Activated CD8-positive, alpha-beta T cell treated with anti-CD3 and anti-CD28 coated beads, Interleukin-2, amount 10 ng/mL, durations not matched to agents 7 days and 5 days (primary cell): ENCODE measurements at regions of chr6 and their contacts with region 1.

Region 1: GRCh38 chr6:29752451-29753308 is 29.4 kb downstream of the HLA-F start:
- DNase-seq: peak; percentile 89
- ATAC-seq: peak; percentile 71
- H3K4me3 Mint-ChIP-seq: peak overlapping the region; percentile 95
- H3K27ac Mint-ChIP-seq: peak overlapping the region; percentile 96
- H3K4me1 Mint-ChIP-seq: peaks cover 53% of the 10 kb centered on the region
- H3K27me3 Mint-ChIP-seq: no peaks in the 10 kb centered on the region

Region 2: DNA sequence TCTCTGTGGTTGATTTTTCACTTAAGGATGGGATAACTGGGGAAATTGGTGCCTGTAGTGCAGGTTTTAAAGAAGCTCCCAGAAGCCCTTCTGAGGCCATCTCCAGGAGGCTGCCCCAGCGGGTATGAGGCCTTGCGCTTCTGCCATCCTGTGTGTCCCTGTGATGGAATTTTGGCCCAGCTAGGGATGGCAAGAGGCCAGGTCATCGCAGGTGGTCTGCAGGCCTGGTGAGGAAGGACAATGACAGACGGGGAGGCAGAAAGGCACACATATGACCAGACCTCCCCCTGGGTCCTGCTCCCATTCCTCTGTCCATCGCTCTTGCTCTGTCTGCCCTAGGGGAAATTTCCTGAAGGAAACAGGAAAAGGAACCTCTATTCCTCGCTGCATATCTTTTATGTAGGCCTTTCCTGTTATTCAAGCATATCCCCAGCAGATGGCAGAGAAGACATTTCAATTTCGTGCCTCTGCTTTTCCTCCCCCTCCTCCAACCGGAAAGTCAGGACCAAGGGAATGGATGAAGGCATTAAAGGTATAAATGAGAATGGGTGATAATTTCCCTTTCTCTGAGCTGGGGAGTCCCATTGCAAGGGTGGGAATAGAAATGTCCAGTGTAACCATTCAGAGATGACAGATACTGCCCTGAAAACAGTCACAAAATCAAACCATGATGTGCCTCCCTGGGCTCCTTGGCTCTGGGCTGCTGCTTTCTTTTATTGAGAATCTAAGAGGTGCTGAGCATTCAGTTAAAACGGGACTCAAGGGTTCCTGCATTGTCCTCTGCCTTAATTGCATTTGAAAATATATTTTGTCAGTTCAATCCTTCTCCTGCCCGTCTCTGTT is 47.1 kb before region 1 on chr6:
- CTCF ChIA-PET with region 1: interaction called, 26 read pairs
- POLR2A ChIA-PET with region 1: interaction called, 3 read pairs
- DNase-seq: peak; percentile 39
- ATAC-seq: no peak
- H3K4me3 Mint-ChIP-seq: no peak overlapping the region
- H3K27ac Mint-ChIP-seq: no peak overlapping the region
- H3K4me1 Mint-ChIP-seq: peaks cover 51% of the 10 kb centered on the region
- H3K27me3 Mint-ChIP-seq: peaks cover 13% of the 10 kb centered on the region

Region 3: GRCh38 chr6:29720863-29721262 is 31.8 kb before region 1 on chr6:
- CTCF ChIA-PET with region 1: interaction called, 10 read pairs
- POLR2A ChIA-PET with region 1: interaction called, 14 read pairs
- DNase-seq: no peak
- ATAC-seq: no peak
- H3K4me3 Mint-ChIP-seq: no peak overlapping the region
- H3K27ac Mint-ChIP-seq: no peak overlapping the region
- H3K4me1 Mint-ChIP-seq: peaks cover 36% of the 10 kb centered on the region
- H3K27me3 Mint-ChIP-seq: no peaks in the 10 kb centered on the region

Region 4: DNA sequence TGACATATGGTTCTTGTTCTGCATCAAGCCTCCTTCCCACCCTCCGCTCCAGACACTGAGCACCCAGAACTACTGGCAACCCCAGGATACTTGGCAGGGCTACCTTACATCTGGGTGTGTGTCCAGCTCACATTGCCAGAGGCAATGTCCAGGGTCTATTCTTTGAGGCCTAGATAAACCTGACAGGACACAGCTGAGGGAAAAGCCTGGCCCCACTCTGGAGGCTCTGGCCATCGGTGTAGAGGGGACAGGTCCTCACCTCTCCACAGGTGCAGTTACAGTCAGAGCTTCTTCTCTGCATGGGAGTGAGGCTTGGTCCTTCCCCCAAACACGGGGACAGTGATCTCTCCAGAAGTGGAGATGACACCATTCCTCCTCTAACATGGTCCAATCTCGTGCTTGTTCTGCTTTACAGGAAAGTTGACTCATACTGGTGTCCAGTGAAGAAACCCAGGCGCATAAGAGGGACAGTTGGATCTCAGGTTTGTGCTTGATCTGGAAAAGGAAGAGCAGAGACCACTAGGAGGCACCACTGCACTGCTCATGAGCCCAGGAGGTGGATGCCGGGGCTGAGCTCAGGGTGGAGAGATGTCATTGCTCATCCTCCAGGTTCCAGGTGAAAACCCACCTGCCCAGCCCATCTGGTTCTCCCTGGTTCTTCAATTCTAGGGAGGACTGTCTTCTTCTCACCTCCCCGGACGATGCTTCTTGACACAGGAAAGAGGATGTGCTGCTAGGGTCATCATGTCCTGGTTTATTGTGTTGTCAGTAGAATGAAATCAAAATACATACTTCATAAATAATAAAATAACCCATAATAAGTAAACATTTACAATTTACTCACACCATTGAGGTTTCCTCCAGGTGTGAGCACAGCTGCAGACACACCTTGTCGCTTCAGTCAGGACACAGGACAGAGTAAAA is 14.7 kb before region 1 on chr6:
- CTCF ChIA-PET with region 1: interaction called, 40 read pairs
- POLR2A ChIA-PET with region 1: interaction called, 3 read pairs
- DNase-seq: peak; percentile 80
- ATAC-seq: peak; percentile 90
- H3K4me3 Mint-ChIP-seq: no peak overlapping the region
- H3K27ac Mint-ChIP-seq: no peak overlapping the region
- H3K4me1 Mint-ChIP-seq: peaks cover 18% of the 10 kb centered on the region
- H3K27me3 Mint-ChIP-seq: no peaks in the 10 kb centered on the region

Region 5: DNA sequence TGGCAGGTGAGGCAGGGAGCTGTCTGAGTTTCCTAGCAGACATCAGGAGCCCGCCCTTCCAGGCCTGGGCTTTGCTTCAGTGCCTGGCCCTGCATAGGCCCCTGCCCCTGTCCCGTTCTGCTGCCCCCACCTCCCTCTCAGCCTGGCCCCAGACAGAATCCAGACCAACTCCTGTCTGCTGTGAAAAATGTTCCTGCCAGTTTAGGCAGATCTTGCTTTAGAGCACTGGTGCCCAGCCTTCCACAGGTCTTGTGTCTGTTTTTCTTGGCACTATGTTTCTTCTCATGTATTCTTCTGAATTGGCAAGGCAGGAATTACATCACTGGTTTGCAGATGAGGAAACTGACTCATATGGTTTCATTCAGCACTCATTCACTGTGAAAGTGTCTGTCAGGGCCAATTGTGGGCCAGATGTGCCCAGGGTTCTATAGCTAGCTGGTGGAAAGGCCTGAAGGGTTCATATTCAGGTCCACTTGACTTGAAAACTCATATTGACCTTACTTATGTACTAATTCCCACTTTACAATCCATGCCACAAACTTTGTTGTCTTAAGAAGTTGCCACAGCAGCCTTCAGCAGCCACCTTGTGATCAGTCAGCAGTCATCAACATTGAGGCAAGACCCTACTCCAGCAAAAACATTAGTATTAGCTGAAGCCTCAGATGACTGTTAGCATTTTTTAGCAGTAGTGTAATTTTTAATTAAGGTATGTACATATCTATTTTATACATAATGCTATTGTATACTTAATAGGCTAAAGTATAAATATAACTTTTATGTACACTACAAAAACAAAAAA is 11.0 kb after region 1 on chr6:
- CTCF ChIA-PET with region 1: interaction called, 13 read pairs
- POLR2A ChIA-PET with region 1: no interaction called
- DNase-seq: peak; percentile 22
- ATAC-seq: no peak
- H3K4me3 Mint-ChIP-seq: no peak overlapping the region
- H3K27ac Mint-ChIP-seq: no peak overlapping the region
- H3K4me1 Mint-ChIP-seq: peaks cover 21% of the 10 kb centered on the region
- H3K27me3 Mint-ChIP-seq: peaks cover 13% of the 10 kb centered on the region

Region 6: DNA sequence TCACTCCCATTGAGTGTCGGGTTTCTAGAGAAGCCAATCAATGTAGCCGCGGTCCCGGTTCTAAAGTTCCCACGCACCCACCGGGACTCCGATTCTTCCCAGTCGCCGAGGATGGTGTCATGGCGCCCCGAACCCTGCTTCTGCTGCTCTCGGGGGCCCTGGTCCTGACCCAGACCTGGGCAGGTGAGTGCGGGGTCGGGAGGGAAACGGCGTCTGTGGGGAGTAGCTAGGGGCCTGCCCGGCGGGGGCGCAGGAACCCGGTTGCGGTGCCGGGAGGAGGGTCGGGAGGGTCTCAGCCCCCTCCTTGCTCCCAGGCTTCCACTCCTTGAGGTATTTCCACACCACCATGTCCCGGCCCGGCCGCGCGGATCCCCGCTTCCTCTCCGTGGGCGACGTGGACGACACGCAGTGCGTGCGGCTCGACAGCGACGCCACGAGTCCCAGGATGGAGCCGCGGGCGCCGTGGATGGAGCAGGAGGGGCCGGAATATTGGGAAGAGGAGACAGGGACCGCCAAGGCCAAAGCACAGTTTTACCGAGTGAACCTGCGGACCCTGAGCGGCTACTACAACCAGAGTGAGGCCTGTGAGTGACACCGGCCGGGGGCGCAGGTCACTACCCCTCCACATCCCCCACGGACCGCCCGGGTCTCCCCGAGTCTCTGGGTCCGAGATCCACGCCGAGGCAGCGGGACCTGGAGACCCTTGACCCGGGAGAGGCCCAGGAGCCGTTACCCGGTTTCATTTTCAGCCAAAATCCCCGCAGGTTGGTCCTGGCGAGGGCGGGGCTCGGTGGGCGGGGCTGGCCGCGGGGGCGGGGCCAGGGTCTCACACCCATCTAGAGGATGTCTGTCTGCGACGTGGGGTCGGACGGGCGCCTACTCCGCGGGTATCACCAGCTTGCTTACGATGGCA is 39.7 kb after region 1 on chr6:
- CTCF ChIA-PET with region 1: no interaction called
- POLR2A ChIA-PET with region 1: no interaction called
- DNase-seq: peak; percentile 67
- ATAC-seq: peak; percentile 91
- H3K4me3 Mint-ChIP-seq: peak overlapping the region; percentile 70
- H3K27ac Mint-ChIP-seq: no peak overlapping the region
- H3K4me1 Mint-ChIP-seq: peaks cover 15% of the 10 kb centered on the region
- H3K27me3 Mint-ChIP-seq: peaks cover 65% of the 10 kb centered on the region

Region 7: GRCh38 chr6:29824144-29824543 is 71.5 kb after region 1 on chr6:
- CTCF ChIA-PET with region 1: no interaction called
- POLR2A ChIA-PET with region 1: no interaction called
- DNase-seq: no peak
- ATAC-seq: no peak
- H3K4me3 Mint-ChIP-seq: no peak overlapping the region
- H3K27ac Mint-ChIP-seq: no peak overlapping the region
- H3K4me1 Mint-ChIP-seq: no peaks in the 10 kb centered on the region
- H3K27me3 Mint-ChIP-seq: peaks cover 73% of the 10 kb centered on the region

Region 8: GRCh38 chr6:29834564-29835436 is 82.1 kb after region 1 on chr6:
- CTCF ChIA-PET with region 1: interaction called, 11 read pairs
- POLR2A ChIA-PET with region 1: no interaction called
- DNase-seq: peak; percentile 62
- ATAC-seq: peak; percentile 61
- H3K4me3 Mint-ChIP-seq: no peak overlapping the region
- H3K27ac Mint-ChIP-seq: no peak overlapping the region
- H3K4me1 Mint-ChIP-seq: peaks cover 8% of the 10 kb centered on the region
- H3K27me3 Mint-ChIP-seq: peaks cover 59% of the 10 kb centered on the region